AG04449 (cell line): ENCODE measurements at regions of chr6 and their contacts with region 1.

Region 1: GRCh38 chr6:122839477-122839876 is 50.4 kb downstream of the SMPDL3A start:
- DNase-seq: no peak
- H3K4me3 ChIP-seq: no peak overlapping the region
- CTCF ChIP-seq: peak; percentile 60

Region 2: DNA sequence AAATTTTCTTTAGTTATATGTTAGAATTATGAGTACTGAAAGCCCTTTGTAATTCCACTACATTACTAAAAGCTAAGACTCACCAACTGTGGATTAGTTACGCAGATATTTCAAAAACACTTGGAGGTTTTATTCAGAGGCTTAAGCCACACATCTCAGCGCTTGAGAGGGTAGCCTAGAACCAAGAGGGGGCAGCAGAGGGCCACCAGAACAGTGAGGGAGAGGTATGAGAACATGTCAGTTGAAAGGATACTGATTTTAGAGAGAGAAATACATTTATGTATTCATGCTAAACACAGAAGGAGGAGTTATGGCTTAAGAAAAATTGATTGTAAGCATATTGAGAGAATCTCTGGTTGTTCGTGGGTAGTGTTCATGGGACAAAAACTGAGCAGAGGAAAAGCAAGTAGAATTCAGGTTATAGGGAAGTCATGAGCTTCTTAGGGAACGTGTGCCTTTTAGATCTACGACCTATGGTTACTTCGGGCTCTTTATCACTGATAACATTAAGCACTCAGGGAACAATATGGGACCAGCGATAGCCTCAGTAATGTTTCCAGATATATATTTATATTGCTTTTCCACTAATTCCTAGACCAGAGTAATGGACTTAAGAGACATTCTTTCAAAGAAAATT is 347.4 kb before region 1 on chr6:
- CTCF ChIA-PET with region 1: interaction called, 36 read pairs
- POLR2A ChIA-PET with region 1: no interaction called
- DNase-seq: peak; percentile 19
- H3K4me3 ChIP-seq: no peak overlapping the region
- CTCF ChIP-seq: peak; percentile 87

Region 3: DNA sequence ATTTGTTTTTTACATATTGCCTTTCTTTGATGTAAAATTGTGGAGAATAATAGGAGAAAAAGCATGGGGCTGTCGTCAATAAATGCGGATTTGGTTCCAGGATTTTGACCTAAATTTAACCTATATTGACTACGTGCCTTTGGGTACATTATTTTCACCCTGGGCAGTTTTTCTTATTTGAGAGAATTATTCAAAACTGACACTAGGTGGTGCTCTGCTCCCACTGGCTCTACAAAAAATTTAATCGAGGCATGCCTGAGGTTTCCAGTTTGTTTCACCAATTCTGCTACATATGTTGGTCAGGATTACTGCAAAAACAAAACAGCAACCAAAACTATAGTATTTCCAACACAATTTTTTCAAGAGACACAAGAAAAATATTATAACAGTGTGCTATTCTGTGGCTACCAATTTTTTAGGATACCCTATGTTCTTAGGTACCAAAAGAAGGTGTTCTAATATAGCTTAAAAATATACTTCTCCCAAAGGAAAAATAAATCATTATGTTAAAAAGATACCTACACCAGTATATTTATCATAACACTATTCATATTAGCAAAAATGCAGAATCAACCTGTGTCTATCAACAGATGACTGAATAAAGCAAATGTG is 108.6 kb before region 1 on chr6:
- CTCF ChIA-PET with region 1: interaction called, 292 read pairs
- POLR2A ChIA-PET with region 1: no interaction called
- DNase-seq: peak; percentile 12
- H3K4me3 ChIP-seq: no peak overlapping the region
- CTCF ChIP-seq: peak; percentile 46

Region 4: GRCh38 chr6:122789182-122790027 is 50.1 kb before region 1 on chr6 and contains the start of gene SMPDL3A:
- CTCF ChIA-PET with region 1: interaction called, 28 read pairs
- POLR2A ChIA-PET with region 1: no interaction called
- DNase-seq: no peak
- H3K4me3 ChIP-seq: peak within 1 kb of the TSS; percentile 77
- CTCF ChIP-seq: peak; percentile 62

Region 5: DNA sequence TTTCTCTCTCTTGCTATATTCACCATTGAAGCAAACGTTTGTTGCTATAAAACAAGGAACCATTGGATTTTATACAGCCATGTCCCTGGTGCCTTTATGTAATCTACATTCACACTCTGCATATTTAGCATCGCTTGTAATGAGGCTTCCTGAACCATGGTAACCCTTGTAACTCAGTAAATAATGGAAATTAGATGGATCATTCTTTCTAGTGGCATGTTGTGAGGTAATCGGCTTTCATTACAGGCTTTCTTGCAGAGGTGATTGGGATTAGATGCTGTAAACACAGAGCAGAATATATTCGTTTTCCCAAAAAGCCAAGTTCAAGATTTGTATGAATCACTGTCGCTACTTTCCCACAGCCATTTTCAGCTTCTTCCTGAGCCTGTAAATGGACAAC is 14.3 kb before region 1 on chr6:
- CTCF ChIA-PET with region 1: interaction called, 30 read pairs
- POLR2A ChIA-PET with region 1: no interaction called
- DNase-seq: no peak
- H3K4me3 ChIP-seq: no peak overlapping the region
- CTCF ChIP-seq: no peak